CD4-positive, alpha-beta T cell (primary cell): ENCODE measurements at regions of chr16 and their contacts with region 1.

Region 1: DNA sequence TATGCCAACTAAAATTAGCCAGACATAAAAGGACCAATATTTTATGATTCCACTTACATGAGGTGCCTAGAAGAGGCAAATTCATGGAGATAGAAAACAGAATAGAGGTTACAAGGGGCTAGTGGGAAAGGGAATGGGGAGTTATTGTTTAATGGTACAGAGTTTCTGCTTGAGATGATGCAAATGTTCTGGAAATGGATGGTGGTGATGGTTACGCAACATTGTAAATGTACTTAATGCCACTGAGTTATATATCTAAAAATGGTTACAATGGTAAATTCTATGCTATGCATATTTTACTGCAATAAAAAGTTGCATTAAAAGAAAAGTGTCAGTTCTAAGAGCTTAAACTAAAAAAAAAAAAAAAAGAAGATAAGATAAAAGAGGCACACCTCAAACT is 17.9 kb downstream of the MT1X start:
- DNase-seq: no peak
- ATAC-seq: no peak
- H3K4me3 ChIP-seq: no peak overlapping the region
- H3K4me3 Mint-ChIP-seq: no peak overlapping the region
- H3K27ac ChIP-seq: no peak overlapping the region
- H3K27ac Mint-ChIP-seq: no peak overlapping the region
- H3K4me1 ChIP-seq: peaks cover 3% of the 10 kb centered on the region
- H3K4me1 Mint-ChIP-seq: peaks cover 9% of the 10 kb centered on the region
- H3K27me3 ChIP-seq: no peaks in the 10 kb centered on the region
- H3K27me3 Mint-ChIP-seq: no peaks in the 10 kb centered on the region
- CTCF ChIP-seq: no peak

Region 2: GRCh38 chr16:55944377-55944802 is 755.8 kb before region 1 on chr16:
- CTCF ChIA-PET with region 1: no interaction called
- POLR2A ChIA-PET with region 1: no interaction called
- intact Hi-C with region 1: loop called (anchors 2 to 10 kb)
- DNase-seq: peak; percentile 21 to 70 (median 34)
- ATAC-seq: peak; percentile 37
- H3K4me3 ChIP-seq: no peak overlapping the region
- H3K4me3 Mint-ChIP-seq: no peak overlapping the region
- H3K27ac ChIP-seq: no peak overlapping the region
- H3K27ac Mint-ChIP-seq: no peak overlapping the region
- H3K4me1 ChIP-seq: no peaks in the 10 kb centered on the region
- H3K4me1 Mint-ChIP-seq: no peaks in the 10 kb centered on the region
- H3K27me3 ChIP-seq: peaks cover 14 to 21% of the 10 kb centered on the region in 2 experiments
- H3K27me3 Mint-ChIP-seq: peaks cover 71% of the 10 kb centered on the region
- CTCF ChIP-seq: peak; percentile 81

Region 3: DNA sequence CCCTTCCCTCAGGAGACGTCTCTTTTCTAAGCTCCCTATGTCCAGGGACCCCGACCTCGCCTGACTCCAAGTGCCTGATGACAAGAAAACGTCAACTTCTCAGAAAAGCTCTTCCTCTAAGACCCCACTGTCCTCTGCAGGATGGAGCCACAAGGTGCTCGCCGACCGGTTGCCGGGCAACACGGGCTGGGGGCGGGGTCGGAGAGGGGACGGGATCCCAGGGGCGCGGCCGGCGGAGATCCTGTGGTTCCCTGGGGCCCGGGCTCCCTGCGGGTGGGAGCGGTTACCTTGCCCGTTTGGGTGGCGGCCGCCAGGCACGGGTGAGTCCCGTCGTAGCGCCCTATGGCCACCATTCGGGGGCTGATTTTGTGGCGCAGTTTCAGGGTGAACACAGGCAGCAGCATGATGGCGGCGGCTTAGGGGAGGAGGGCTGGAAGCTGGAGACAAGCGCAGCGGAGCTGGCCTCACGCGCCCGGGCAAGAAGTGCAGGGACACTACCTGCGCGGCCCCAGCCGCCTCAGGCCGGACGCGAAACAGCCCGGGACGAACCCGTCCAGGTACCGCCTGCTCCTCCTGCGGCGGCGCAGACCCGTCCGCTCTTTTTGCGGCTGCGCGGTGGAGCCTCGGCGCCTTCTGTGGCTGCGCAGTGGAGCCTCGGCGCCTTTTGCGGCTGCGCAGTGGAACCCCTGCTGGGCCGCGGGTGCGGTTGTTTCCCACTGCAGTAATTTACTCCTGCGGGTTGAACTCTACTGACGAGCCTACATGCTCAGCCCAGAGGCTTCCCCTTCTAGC is 180.5 kb before region 1 on chr16 and contains the start of gene BBS2:
- CTCF ChIA-PET with region 1: interaction called, 15 read pairs
- POLR2A ChIA-PET with region 1: interaction called, 13 read pairs
- intact Hi-C with region 1: loop called (anchors 1 kb)
- DNase-seq: peak; percentile 87 to 97 (median 92)
- ATAC-seq: peak; percentile 84
- H3K4me3 ChIP-seq: peak within 1 kb of the TSS; percentile 97
- H3K4me3 Mint-ChIP-seq: peak within 1 kb of the TSS; percentile 91
- H3K27ac ChIP-seq: peak within 1 kb of the TSS; percentile 80 to 91
- H3K27ac Mint-ChIP-seq: peak within 1 kb of the TSS; percentile 90
- H3K4me1 ChIP-seq: peaks cover 33% of the 10 kb centered on the region
- H3K4me1 Mint-ChIP-seq: peaks cover 51% of the 10 kb centered on the region
- H3K27me3 ChIP-seq: no peaks in the 10 kb centered on the region
- H3K27me3 Mint-ChIP-seq: no peaks in the 10 kb centered on the region
- CTCF ChIP-seq: no peak
- total RNA-seq, gene BBS2: 69.6 to 72.8 TPM

Region 4: GRCh38 chr16:56608043-56608875 is 91.9 kb before region 1 on chr16 and contains the start of gene MT2A:
- CTCF ChIA-PET with region 1: interaction called, 16 read pairs
- POLR2A ChIA-PET with region 1: interaction called, 9 read pairs
- intact Hi-C with region 1: loop called in 1 of 2 experiments (anchors 1 kb)
- DNase-seq: peak; percentile 69 to 95 (median 85)
- ATAC-seq: peak; percentile 72
- H3K4me3 ChIP-seq: peak within 1 kb of the TSS; percentile 80
- H3K4me3 Mint-ChIP-seq: peak within 1 kb of the TSS; percentile 98
- H3K27ac ChIP-seq: peak within 1 kb of the TSS; percentile 71 to 88
- H3K27ac Mint-ChIP-seq: peak within 1 kb of the TSS; percentile 96
- H3K4me1 ChIP-seq: peaks cover 50% of the 10 kb centered on the region
- H3K4me1 Mint-ChIP-seq: peaks cover 57% of the 10 kb centered on the region
- H3K27me3 ChIP-seq: no peaks in the 10 kb centered on the region
- H3K27me3 Mint-ChIP-seq: no peaks in the 10 kb centered on the region
- CTCF ChIP-seq: no peak
- total RNA-seq, gene MT2A: 47.1 to 50.8 TPM

Region 5: DNA sequence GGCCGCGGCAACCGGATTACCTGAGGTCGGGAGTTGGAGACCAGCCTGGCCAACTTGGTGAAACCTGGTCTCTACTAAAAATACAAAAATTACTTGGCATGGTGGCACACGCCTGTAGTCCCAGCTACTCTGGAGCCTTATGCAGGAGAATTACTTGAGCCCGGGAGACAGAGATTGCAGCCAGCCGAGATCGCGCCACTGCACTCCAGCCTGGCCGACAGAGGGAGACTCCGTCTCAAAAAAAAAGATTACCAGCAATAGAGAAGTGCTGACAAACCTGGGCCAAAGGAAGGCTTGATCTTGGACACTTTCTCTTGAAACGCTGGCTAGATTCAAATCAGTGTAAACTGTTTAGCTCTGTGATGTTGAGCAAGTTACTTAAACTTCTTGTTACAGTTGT is 26.3 kb before region 1 on chr16:
- CTCF ChIA-PET with region 1: interaction called, 5 read pairs
- POLR2A ChIA-PET with region 1: interaction called, 10 read pairs
- intact Hi-C with region 1: loop called in 1 of 2 experiments (anchors 1 kb)
- DNase-seq: peak in 6 of 14 experiments; percentile 16 to 57 (median 28)
- ATAC-seq: no peak
- H3K4me3 ChIP-seq: no peak overlapping the region
- H3K4me3 Mint-ChIP-seq: peak overlapping the region; percentile 65
- H3K27ac ChIP-seq: no peak overlapping the region
- H3K27ac Mint-ChIP-seq: no peak overlapping the region
- H3K4me1 ChIP-seq: peaks cover 21% of the 10 kb centered on the region
- H3K4me1 Mint-ChIP-seq: peaks cover 30% of the 10 kb centered on the region
- H3K27me3 ChIP-seq: peaks cover 21 to 30% of the 10 kb centered on the region in 2 experiments
- H3K27me3 Mint-ChIP-seq: peaks cover 64% of the 10 kb centered on the region
- CTCF ChIP-seq: no peak

Region 6: GRCh38 chr16:56729735-56730662 is 29.8 kb after region 1 on chr16 and contains the start of gene NUP93:
- CTCF ChIA-PET with region 1: interaction called, 4 read pairs
- POLR2A ChIA-PET with region 1: interaction called, 11 read pairs
- intact Hi-C with region 1: loop called in 1 of 2 experiments (anchors 1 kb)
- DNase-seq: peak; percentile 81 to 96 (median 87)
- ATAC-seq: peak; percentile 93
- H3K4me3 ChIP-seq: peak within 1 kb of the TSS; percentile 99
- H3K4me3 Mint-ChIP-seq: no peak within 1 kb of the TSS
- H3K27ac ChIP-seq: peak within 1 kb of the TSS; percentile 44 to 57
- H3K27ac Mint-ChIP-seq: peak within 1 kb of the TSS; percentile 93
- H3K4me1 ChIP-seq: peaks cover 26% of the 10 kb centered on the region
- H3K4me1 Mint-ChIP-seq: peaks cover 34% of the 10 kb centered on the region
- H3K27me3 ChIP-seq: no peaks in the 10 kb centered on the region
- H3K27me3 Mint-ChIP-seq: no peaks in the 10 kb centered on the region
- CTCF ChIP-seq: no peak
- total RNA-seq, gene NUP93: 45.6 to 47.2 TPM

Region 7: DNA sequence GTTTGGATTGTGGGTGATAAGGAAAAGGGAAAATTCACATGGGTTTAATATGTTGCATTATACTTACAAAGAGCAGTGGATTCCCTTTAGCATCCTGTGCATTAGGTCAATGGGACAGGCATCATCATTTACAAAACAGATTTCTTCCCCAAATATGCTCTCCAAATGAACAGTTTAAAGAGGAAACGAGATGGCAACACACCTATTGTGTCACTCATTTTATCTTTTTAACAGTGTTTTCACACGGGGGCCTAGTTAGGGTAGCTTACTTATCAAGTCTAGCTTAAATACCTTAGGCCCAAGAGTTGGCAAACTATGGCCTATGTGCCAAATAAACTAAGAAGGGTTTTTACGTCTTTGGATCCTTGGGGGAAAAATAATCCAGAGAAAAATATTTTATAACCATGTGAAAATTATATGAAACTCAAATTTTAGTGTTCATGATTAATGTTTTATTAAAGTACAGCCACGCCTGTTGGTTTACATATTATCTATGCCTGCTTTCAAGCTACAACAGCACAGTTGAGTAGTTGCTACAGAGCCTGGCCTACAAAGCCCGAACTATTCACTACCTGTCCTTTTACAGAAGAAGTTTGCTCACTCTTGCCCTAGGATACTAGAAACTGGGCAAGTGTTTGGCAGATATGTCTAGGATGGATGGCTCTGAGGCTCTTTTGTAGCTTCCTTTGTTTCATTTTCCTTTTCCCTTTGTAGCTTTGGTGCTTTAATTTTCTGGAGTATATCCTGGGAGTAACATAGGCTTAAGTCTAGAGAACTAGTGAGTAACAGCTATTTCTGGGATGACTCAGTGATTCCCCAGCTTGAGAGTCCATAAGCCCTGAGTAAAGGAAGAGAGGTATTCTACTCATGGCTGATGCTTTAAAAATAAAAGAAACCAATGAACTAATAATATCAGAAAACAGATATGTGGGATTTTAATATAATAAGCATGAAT is 42.1 kb after region 1 on chr16:
- CTCF ChIA-PET with region 1: no interaction called
- POLR2A ChIA-PET with region 1: no interaction called
- intact Hi-C with region 1: no loop called
- DNase-seq: no peak
- ATAC-seq: no peak
- H3K4me3 ChIP-seq: no peak overlapping the region
- H3K4me3 Mint-ChIP-seq: no peak overlapping the region
- H3K27ac ChIP-seq: no peak overlapping the region
- H3K27ac Mint-ChIP-seq: no peak overlapping the region
- H3K4me1 ChIP-seq: no peaks in the 10 kb centered on the region
- H3K4me1 Mint-ChIP-seq: peaks cover 30% of the 10 kb centered on the region
- H3K27me3 ChIP-seq: no peaks in the 10 kb centered on the region
- H3K27me3 Mint-ChIP-seq: no peaks in the 10 kb centered on the region
- CTCF ChIP-seq: no peak